A673 (cell line): ENCODE measurements at regions of chr12 and their contacts with region 1.

Region 1: DNA sequence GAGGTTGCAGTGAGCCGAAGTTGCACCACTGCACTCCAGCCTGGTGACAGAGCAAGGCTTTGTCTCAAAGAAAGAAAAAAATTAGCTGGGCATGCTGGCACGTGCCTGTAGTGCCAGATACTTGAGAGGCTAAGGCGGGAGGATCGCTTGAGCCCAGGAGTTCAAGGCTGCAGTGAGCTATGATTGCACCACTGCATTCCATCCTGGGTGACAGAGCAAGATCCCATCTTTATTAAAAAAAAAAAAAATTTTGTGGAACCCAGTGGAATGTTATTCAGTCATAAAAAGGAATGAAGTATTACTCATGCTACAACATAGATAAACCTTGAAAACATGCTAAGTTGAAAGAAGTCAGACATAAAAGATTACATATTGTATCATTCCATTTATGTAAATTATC is 8.3 kb upstream of the ERBB3 start:
- DNase-seq: no peak
- H3K4me3 ChIP-seq: no peak overlapping the region
- H3K27ac ChIP-seq: no peak overlapping the region
- H3K4me1 ChIP-seq: no peaks in the 10 kb centered on the region
- H3K27me3 ChIP-seq: no peaks in the 10 kb centered on the region
- CTCF ChIP-seq: no peak

Region 2: DNA sequence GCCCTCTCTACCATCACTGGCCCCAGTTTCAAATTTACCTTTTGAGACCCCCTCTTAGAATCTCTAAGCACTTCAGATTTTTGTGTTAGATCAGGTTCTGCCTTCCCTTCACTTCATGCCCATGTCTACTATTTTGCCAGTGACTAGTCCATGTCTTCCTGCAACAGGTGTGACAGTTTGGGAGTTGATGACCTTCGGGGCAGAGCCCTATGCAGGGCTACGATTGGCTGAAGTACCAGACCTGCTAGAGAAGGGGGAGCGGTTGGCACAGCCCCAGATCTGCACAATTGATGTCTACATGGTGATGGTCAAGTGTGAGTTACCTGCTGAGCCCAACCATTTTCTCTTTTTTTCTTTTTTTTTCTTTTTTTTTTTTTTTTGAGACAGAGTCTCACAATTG is 26.9 kb after region 1 on chr12:
- CTCF ChIA-PET with region 1: no interaction called
- POLR2A ChIA-PET with region 1: interaction called, 12 read pairs
- intact Hi-C with region 1: no loop called
- DNase-seq: no peak
- H3K4me3 ChIP-seq: no peak overlapping the region
- H3K27ac ChIP-seq: no peak overlapping the region
- H3K4me1 ChIP-seq: peaks cover 6% of the 10 kb centered on the region
- H3K27me3 ChIP-seq: peaks cover 16% of the 10 kb centered on the region
- CTCF ChIP-seq: no peak